AG04449 (cell line): ENCODE measurements at regions of chr1 and their contacts with region 1.

Region 1: GRCh38 chr1:36217670-36218069 is 6.6 kb upstream of the THRAP3 start:
- DNase-seq: no peak
- H3K4me3 ChIP-seq: no peak overlapping the region
- CTCF ChIP-seq: peak; percentile 26

Region 2: DNA sequence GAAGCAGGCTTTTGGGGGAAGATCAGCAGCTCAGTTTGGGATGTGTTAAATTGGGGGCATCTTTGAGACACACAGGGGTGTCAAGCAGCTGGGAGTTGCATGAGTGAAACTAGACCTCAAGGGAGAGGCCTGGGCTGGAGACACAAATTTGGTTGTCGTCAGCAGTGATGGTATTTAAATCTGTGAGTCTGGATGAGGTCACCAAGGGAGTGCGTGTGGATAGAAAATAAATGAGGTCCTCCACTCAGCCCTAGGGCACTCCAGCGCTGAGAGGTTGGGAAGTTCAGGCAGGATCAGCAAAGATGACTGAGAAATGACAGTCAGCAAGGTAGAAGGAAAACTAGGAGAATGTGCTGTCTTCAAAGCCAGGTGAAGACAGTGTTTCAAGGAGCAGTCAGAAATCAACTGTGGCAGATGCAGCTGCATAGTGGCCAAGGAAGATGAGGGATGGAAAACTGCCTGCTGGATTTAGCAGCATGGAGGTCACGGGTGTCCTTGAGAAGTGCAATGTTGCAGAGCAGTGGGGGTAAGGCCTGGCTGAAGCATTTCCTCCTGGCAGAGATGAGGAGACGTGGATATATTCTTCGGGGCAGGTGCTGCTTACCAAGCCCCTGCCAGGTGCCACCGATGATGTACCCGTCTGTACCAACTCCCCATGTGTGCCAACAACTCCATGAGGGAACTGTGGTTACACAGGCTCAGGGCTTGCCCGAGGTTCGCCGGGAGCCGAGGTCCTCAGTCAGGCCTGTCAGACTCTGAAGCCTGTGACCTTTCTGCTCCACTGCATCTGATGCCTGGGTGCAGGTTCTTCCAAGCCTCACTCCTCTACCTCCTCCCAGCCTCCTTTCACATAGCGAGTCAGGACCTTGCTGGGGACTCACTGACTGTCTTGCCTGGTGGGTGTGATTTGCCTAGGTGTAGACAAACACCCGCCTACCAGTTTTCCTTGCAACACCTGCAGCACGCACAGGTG is 50.4 kb before region 1 on chr1:
- CTCF ChIA-PET with region 1: no interaction called
- POLR2A ChIA-PET with region 1: no interaction called
- DNase-seq: no peak
- H3K4me3 ChIP-seq: no peak overlapping the region
- CTCF ChIP-seq: no peak

Region 3: GRCh38 chr1:36207339-36207738 is 10.3 kb before region 1 on chr1:
- CTCF ChIA-PET with region 1: interaction called, 20 read pairs
- POLR2A ChIA-PET with region 1: no interaction called
- DNase-seq: no peak
- H3K4me3 ChIP-seq: no peak overlapping the region
- CTCF ChIP-seq: no peak